PC-3 (cell line): ENCODE measurements at regions of chr15 and their contacts with region 1.

Region 1: DNA sequence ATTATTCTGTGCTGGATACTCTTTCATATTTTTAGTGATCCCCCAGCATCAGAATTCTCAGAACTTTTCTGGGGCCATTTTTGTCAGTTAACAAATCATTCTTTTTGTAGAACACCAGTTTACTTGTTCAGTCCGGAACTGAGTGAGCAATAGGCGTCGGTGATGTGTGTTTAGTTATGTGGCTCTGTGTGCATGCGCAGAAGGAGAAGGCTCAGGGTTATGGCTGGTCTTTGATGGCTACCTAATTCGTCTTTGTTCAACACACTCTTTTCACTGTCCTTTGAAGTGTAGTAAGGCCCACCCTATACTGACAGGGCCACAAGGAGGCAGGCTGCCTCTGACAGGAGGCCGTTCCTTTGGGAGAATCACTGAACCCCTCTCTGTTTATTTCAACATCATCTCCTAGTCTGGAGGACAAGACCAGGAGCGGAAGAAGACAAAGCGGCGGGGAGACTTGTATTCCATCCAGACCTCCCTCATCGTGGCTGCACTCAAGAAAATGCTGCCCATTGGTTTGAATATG is 158.2 kb upstream of the CHRM5 start:
- DNase-seq: no peak
- ATAC-seq: no peak
- H3K4me3 ChIP-seq: no peak overlapping the region
- H3K27ac ChIP-seq: no peak overlapping the region
- H3K4me1 ChIP-seq: no peaks in the 10 kb centered on the region
- H3K27me3 ChIP-seq: peaks cover 86% of the 10 kb centered on the region
- CTCF ChIP-seq: 0 out of 2 replicates have a peak, but pooled peaks have one; percentile 11

Region 2: GRCh38 chr15:33508703-33509102 is 301.4 kb before region 1 on chr15:
- CTCF ChIA-PET with region 1: no interaction called
- POLR2A ChIA-PET with region 1: interaction called, 10 read pairs
- intact Hi-C with region 1: no loop called
- DNase-seq: no peak
- ATAC-seq: no peak
- H3K4me3 ChIP-seq: no peak overlapping the region
- H3K27ac ChIP-seq: no peak overlapping the region
- H3K4me1 ChIP-seq: no peaks in the 10 kb centered on the region
- H3K27me3 ChIP-seq: peaks cover 89% of the 10 kb centered on the region
- CTCF ChIP-seq: no peak